Right lobe of liver (tissue), 6 donors: ENCODE measurements at regions of chr16 and their contacts with region 1.

Region 1: DNA sequence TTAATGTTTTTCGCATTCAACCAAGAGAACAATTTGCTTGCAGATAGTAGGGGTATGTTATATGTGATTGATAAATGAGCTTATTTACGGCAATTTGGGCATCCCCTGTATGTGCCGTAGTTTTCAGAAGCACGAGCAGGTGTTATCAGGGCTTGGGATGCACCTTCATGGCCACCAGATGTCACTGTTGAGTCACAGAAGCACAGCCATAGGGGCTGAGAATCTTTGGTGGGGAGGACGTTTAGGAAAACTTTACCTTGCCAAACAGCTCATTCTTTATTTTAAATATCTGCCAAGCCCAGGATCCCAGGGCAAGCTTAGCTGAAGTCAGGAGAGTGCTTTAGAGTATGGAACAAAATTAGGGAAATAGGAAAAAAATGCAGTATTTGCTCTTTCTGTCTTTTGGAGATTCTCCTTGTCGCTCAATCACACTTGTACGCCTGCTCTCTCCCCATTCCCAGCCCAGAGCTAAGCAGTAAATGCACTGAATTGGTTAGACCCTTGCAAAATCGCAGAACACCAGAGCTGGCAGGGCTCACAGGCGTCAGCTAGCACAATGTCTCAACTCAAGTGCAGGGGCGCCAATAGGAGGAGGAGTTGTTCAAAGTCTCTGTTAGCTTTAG is 93.6 kb upstream of the MPHOSPH6 start:
- DNase-seq: peak; percentile 29 to 63 (median 59)
- ATAC-seq: peak; percentile 89 to 96 (median 94)
- H3K4me3 ChIP-seq: no peak overlapping the region
- H3K27ac ChIP-seq: no peak overlapping the region
- H3K4me1 ChIP-seq: peaks cover 0 to 7% (median 3%) of the 10 kb centered on the region in 4 donors
- H3K27me3 ChIP-seq: no peaks in the 10 kb centered on the region
- CTCF ChIP-seq: peak; percentile 83 to 97 (median 96)
- POLR2A ChIP-seq: no peak

Region 2: GRCh38 chr16:82146957-82147356 is 116.7 kb before region 1 on chr16:
- intact Hi-C with region 1: no loop called
- DNase-seq: no peak
- ATAC-seq: no peak
- H3K4me3 ChIP-seq: no peak overlapping the region
- H3K27ac ChIP-seq: no peak overlapping the region
- H3K4me1 ChIP-seq: no peaks in the 10 kb centered on the region
- H3K27me3 ChIP-seq: no peaks in the 10 kb centered on the region
- CTCF ChIP-seq: no peak
- POLR2A ChIP-seq: no peak

Region 3: DNA sequence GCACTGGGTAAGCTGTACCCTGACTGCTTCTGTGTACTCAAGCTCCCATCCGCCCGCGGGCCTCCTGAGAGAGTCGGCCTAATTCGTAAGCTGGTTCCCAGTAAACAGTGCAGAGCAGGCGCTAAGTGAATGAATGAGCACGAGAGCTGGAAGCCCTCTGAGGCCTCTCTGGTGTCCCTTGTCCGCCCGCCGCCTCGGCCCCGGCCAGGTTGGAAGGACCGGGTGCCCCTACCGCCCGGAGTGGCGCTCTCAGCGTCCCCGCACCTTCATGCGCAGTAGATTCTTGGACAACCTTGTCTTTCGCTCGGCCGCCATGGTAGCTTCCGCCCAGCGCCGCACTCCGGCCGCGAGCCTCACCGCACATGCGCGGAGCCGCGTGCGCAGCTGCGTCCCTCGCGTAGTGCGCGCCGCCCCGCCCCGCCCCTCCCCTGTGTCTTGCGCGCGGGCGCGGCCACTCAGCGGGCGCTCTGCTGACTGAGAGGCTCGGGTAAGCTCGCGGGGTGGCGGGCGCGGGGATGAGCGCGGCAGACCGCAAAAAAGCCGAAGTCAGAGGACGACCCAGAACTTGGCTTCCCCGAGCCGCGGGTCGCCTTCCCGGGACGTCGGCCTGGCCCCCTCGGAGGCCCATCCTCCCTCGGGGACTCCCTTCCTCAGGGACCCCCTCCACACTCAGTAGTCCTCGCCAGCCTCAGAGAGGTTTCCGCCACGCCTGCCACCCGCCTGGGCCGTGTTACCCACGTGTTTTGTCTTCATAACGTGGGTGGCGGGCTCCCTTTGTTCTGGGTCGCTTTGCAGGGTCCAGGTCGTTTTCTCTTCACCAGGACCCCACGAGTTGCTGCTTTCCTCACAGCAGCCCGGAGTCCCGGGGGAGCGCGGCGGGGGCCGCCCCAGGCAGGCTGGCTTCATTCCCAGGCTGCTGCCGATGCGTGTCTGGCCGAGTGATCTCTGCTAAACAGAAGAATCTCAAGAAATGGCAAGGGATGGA is 93.5 kb before region 1 on chr16 and contains the start of gene MPHOSPH6:
- intact Hi-C with region 1: no loop called
- DNase-seq: peak; percentile 92 to 93 (median 93)
- ATAC-seq: peak; percentile 99 to 100 (median 99)
- H3K4me3 ChIP-seq: peak within 1 kb of the TSS; percentile 72 to 80 (median 76)
- H3K27ac ChIP-seq: peak within 1 kb of the TSS; percentile 60 to 72 (median 71)
- H3K4me1 ChIP-seq: peaks cover 0 to 12% (median 2%) of the 10 kb centered on the region in 4 donors
- H3K27me3 ChIP-seq: no peaks in the 10 kb centered on the region
- CTCF ChIP-seq: peak in 1 of 4 donors; percentile 19
- POLR2A ChIP-seq: peak; percentile 79
- total RNA-seq, gene MPHOSPH6: 5.0 to 22.1 (median 9.4) TPM

Region 4: GRCh38 chr16:82344157-82344556 is 80.5 kb after region 1 on chr16:
- intact Hi-C with region 1: loop called in 1 of 2 experiments (anchors 10 kb)
- DNase-seq: no peak
- ATAC-seq: peak; percentile 79 to 95 (median 88)
- H3K4me3 ChIP-seq: no peak overlapping the region
- H3K27ac ChIP-seq: no peak overlapping the region
- H3K4me1 ChIP-seq: no peaks in the 10 kb centered on the region
- H3K27me3 ChIP-seq: no peaks in the 10 kb centered on the region
- CTCF ChIP-seq: peak; percentile 44 to 75 (median 46)
- POLR2A ChIP-seq: no peak

Region 5: DNA sequence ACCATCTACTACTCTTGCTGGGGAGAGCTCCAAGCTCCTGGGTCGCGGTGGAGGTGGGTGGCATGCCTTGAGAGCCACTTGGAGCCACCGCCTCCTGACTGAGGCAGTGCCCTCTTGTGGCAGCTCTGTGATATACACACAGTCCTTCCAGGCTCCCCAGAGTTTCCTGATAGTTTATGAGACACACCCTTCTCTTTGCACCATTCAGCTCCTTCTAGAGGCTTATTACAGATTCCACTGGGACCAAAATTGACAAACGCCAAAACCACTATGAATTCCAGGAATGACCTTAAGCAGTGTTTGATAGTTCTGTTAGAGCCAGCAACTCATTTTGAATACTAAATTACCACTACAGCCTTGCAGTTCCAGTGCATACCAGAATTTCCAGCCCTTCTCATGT is 193.1 kb after region 1 on chr16:
- intact Hi-C with region 1: loop called (anchors 10 kb)
- DNase-seq: peak in 2 of 3 donors; percentile 50 to 61
- ATAC-seq: peak; percentile 93 to 97 (median 94)
- H3K4me3 ChIP-seq: no peak overlapping the region
- H3K27ac ChIP-seq: no peak overlapping the region
- H3K4me1 ChIP-seq: peaks cover 0 to 2% (median 0%) of the 10 kb centered on the region in 4 donors
- H3K27me3 ChIP-seq: no peaks in the 10 kb centered on the region
- CTCF ChIP-seq: peak; percentile 54 to 84 (median 73)
- POLR2A ChIP-seq: no peak